Heart left ventricle (tissue), 16 donors: ENCODE measurements at regions of chr7 and their contacts with region 1.

Region 1: GRCh38 chr7:51067757-51068156 is 248.9 kb downstream of the COBL start:
- DNase-seq: peak; percentile 43 to 66 (median 56)
- ATAC-seq: peak in 1 of 4 donors; percentile 59
- H3K4me3 ChIP-seq: no peak overlapping the region
- H3K27ac ChIP-seq: no peak overlapping the region
- H3K4me1 ChIP-seq: peaks cover 8 to 40% (median 20%) of the 10 kb centered on the region in 12 donors
- H3K27me3 ChIP-seq: no peaks in the 10 kb centered on the region
- CTCF ChIP-seq: peak; percentile 59 to 84 (median 74)
- POLR2A ChIP-seq: no peak

Region 2: GRCh38 chr7:50467817-50468610 is 599.7 kb before region 1 on chr7:
- intact Hi-C with region 1: loop called in 7 of 10 experiments (anchors 5 to 10 kb)
- DNase-seq: peak; percentile 72 to 89 (median 80)
- ATAC-seq: peak; percentile 70 to 97 (median 90)
- H3K4me3 ChIP-seq: peak overlapping the region in 1 of 12 donors; percentile 12
- H3K27ac ChIP-seq: no peak overlapping the region
- H3K4me1 ChIP-seq: peaks cover 0 to 8% (median 0%) of the 10 kb centered on the region in 12 donors
- H3K27me3 ChIP-seq: peaks cover 0 to 5% (median 0%) of the 10 kb centered on the region in 9 donors
- CTCF ChIP-seq: peak; percentile 85 to 96 (median 89)
- POLR2A ChIP-seq: no peak

Region 3: DNA sequence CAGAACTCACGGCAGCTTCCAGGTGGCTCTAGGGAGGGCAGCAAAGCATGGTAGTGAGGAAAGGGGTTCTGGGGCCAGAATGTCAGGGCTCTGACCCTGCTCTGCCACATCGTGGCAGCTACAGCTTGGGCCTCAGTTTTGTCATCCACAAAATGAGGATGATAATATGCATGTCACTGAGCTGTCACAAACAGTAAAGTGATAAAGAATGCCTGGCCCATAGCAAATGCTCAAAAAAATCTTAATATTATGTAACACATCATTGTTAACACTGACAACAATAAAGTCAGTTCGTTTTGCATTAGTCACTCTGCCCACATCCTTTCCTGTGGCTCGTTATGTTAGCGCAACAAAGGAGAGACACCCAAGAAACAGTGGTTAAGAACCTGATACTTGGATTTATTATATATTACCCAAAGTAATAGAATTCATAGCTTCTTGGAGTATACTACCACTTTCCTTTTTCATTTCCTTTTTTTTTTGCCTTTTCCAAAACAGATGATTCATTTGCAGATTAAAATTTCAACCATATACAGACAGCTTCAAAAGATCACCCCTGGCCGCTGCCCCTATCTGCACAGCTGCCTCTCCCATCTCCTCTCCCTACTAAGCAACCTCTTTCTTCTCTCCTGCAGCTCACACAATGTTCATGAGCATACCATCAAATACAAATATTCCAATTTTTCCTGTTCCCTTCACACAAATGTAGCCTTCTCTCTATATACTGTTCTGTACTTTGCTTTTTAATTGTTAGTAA is 457.1 kb before region 1 on chr7:
- intact Hi-C with region 1: loop called in 4 of 10 experiments (anchors 10 kb)
- DNase-seq: no peak
- ATAC-seq: no peak
- H3K4me3 ChIP-seq: no peak overlapping the region
- H3K27ac ChIP-seq: peak overlapping the region in 1 of 12 donors; percentile 62
- H3K4me1 ChIP-seq: peaks cover 0 to 27% (median 0%) of the 10 kb centered on the region in 12 donors
- H3K27me3 ChIP-seq: no peaks in the 10 kb centered on the region
- CTCF ChIP-seq: no peak
- POLR2A ChIP-seq: no peak

Region 4: GRCh38 chr7:50793115-50793946 is 274.4 kb before region 1 on chr7:
- intact Hi-C with region 1: loop called in 6 of 10 experiments (anchors 5 to 10 kb)
- DNase-seq: peak; percentile 82 to 87 (median 84)
- ATAC-seq: peak; percentile 44 to 88 (median 76)
- H3K4me3 ChIP-seq: peak overlapping the region in 11 of 12 donors; percentile 36 to 94 (median 70)
- H3K27ac ChIP-seq: peak overlapping the region; percentile 64 to 94 (median 85)
- H3K4me1 ChIP-seq: peaks cover 3 to 46% (median 27%) of the 10 kb centered on the region in 12 donors
- H3K27me3 ChIP-seq: no peaks in the 10 kb centered on the region
- CTCF ChIP-seq: peak in 1 of 12 donors; percentile 1
- POLR2A ChIP-seq: peak in 1 of 2 donors; percentile 20

Region 5: GRCh38 chr7:51009704-51010496 is 57.9 kb before region 1 on chr7:
- intact Hi-C with region 1: loop called in 1 of 10 experiments (anchors 5 kb)
- DNase-seq: peak in 4 of 5 donors; percentile 58 to 77 (median 64)
- ATAC-seq: peak; percentile 34 to 67 (median 55)
- H3K4me3 ChIP-seq: no peak overlapping the region
- H3K27ac ChIP-seq: peak overlapping the region in 5 of 12 donors; percentile 14 to 67 (median 45)
- H3K4me1 ChIP-seq: peaks cover 8 to 48% (median 25%) of the 10 kb centered on the region in 12 donors
- H3K27me3 ChIP-seq: no peaks in the 10 kb centered on the region
- CTCF ChIP-seq: no peak
- POLR2A ChIP-seq: no peak

Region 6: GRCh38 chr7:51350200-51350921 is 282.6 kb after region 1 on chr7:
- intact Hi-C with region 1: loop called in 1 of 10 experiments (anchors 10 kb)
- DNase-seq: no peak
- ATAC-seq: peak; percentile 82 to 92 (median 88)
- H3K4me3 ChIP-seq: no peak overlapping the region
- H3K27ac ChIP-seq: peak overlapping the region in 4 of 12 donors; percentile 16 to 33 (median 22)
- H3K4me1 ChIP-seq: peaks cover 0 to 10% (median 0%) of the 10 kb centered on the region in 12 donors
- H3K27me3 ChIP-seq: no peaks in the 10 kb centered on the region
- CTCF ChIP-seq: no peak
- POLR2A ChIP-seq: no peak